Transverse colon (tissue), 4 donors: ENCODE measurements at regions of chr3 and their contacts with region 1.

Region 1: DNA sequence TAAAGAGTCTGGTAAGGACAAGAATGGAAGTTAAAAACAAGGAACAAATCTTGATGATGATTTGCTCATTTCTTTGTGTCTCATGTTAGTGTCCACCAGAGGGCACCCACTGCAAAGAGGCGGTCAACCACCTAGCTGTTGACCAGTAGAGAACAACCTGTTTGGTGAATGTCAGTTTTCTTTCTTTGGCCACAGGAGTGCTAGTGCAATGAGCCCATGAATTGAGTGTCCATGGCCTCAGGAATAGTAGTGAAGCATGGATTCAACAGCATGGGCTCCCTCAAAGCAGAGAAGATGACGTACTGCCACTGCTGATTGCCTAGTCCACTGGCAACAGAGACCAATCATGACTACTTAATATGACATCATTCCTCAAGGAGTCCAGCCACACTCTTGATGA is 10.7 kb upstream of the CNTN6 start:
- DNase-seq: peak; percentile 43
- H3K4me3 ChIP-seq: no peak overlapping the region
- H3K27ac ChIP-seq: no peak overlapping the region
- H3K4me1 ChIP-seq: no peaks in the 10 kb centered on the region
- H3K27me3 ChIP-seq: no peaks in the 10 kb centered on the region
- CTCF ChIP-seq: peak; percentile 42 to 66 (median 60)
- EP300 ChIP-seq: no peak
- POLR2A ChIP-seq: no peak

Region 2: GRCh38 chr3:976021-976420 is 106.1 kb before region 1 on chr3:
- in situ Hi-C with region 1: no loop called
- intact Hi-C with region 1: no loop called
- DNase-seq: no peak
- H3K4me3 ChIP-seq: no peak overlapping the region
- H3K27ac ChIP-seq: no peak overlapping the region
- H3K4me1 ChIP-seq: no peaks in the 10 kb centered on the region
- H3K27me3 ChIP-seq: no peaks in the 10 kb centered on the region
- CTCF ChIP-seq: no peak
- EP300 ChIP-seq: no peak
- POLR2A ChIP-seq: no peak

Region 3: GRCh38 chr3:1987980-1988379 is 905.9 kb after region 1 on chr3:
- in situ Hi-C with region 1: loop called in 1 of 4 experiments (anchors 25 kb)
- intact Hi-C with region 1: no loop called
- DNase-seq: peak; percentile 28
- H3K4me3 ChIP-seq: no peak overlapping the region
- H3K27ac ChIP-seq: no peak overlapping the region
- H3K4me1 ChIP-seq: no peaks in the 10 kb centered on the region
- H3K27me3 ChIP-seq: no peaks in the 10 kb centered on the region
- CTCF ChIP-seq: peak; percentile 21 to 49 (median 40)
- EP300 ChIP-seq: no peak
- POLR2A ChIP-seq: no peak

Region 4: DNA sequence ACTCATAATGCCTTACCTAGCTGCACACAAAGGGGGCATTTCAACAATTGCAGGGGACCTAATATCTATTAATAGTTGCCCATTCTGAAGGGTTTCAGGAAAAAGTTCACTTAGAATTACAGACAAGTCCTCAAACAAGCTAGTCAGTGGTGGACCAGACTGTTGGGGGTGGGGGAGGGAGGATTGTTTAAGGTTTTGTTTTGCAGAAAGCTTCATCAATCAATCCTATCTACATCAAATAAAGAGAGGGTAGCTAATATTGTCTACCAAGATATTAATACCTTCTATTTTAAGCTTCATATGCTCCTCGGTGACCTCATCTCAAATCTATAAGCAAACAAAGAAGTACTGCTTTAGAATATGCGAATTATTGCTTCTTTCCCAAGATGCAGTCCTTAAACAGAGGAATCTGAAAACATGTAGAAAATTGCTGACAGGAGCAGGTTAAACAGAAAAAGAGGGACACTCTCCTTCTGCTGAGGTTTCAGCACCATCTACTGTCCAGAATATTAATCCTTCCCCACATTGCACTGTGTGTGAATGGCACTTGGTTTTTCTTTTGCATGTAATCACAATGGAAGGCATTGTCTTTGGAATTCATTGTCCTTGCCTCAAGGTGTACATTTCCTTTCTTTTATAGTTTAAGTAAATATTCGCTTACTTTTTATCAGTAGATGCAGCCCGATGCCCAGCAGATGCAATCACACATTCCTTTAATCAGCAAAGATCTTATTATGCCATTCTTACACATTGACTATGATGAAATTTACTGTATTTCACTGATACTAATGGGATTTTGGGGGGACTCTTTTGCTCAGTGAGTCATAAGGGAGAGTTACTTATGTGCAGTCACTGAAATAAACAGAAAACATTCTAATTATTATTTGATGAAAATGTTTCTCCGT is 1933.3 kb after region 1 on chr3:
- in situ Hi-C with region 1: loop called in 1 of 4 experiments (anchors 25 kb)
- intact Hi-C with region 1: no loop called
- DNase-seq: no peak
- H3K4me3 ChIP-seq: no peak overlapping the region
- H3K27ac ChIP-seq: no peak overlapping the region
- H3K4me1 ChIP-seq: peaks cover 0 to 17% (median 0%) of the 10 kb centered on the region in 4 donors
- H3K27me3 ChIP-seq: no peaks in the 10 kb centered on the region
- CTCF ChIP-seq: peak; percentile 31 to 47 (median 43)
- EP300 ChIP-seq: no peak
- POLR2A ChIP-seq: no peak